Aorta (tissue), 5 donors: ENCODE measurements at regions of chrX and their contacts with region 1.

Region 1: GRCh38 chrX:17632942-17633341 is 104.4 kb upstream of the SCML1 start:
- DNase-seq: no peak
- ATAC-seq: no peak
- H3K4me3 ChIP-seq: no peak overlapping the region
- H3K27ac ChIP-seq: peak overlapping the region; percentile 75 to 84
- H3K4me1 ChIP-seq: peaks cover 0 to 2% of the 10 kb centered on the region in 2 donors
- H3K27me3 ChIP-seq: no peaks in the 10 kb centered on the region

Region 2: GRCh38 chrX:17021851-17022604 is 610.9 kb before region 1 on chrX:
- intact Hi-C with region 1: no loop called
- DNase-seq: no peak
- ATAC-seq: no peak
- H3K4me3 ChIP-seq: no peak overlapping the region
- H3K27ac ChIP-seq: no peak overlapping the region
- H3K4me1 ChIP-seq: peaks cover 0 to 4% of the 10 kb centered on the region in 2 donors
- H3K27me3 ChIP-seq: no peaks in the 10 kb centered on the region

Region 3: DNA sequence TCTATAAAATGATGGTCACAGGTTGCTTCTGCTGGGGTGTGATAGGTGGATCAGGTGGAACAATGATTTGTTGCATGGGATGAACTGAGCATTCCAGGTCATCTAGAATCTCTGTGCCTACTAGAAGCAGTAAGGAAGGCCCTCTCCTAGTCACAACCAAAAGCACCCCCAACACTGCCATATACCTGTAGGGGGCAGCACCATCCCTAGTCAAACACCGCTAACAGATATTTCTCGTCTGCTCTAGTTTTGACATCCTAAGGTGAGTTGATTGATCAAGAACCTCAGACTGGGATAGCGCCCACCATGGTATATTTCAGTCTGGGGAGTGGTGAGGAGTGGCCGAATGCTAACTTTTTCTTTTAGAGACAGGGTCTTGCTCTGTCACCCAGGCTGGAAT is 97.7 kb before region 1 on chrX:
- intact Hi-C with region 1: no loop called
- DNase-seq: no peak
- ATAC-seq: no peak
- H3K4me3 ChIP-seq: no peak overlapping the region
- H3K27ac ChIP-seq: no peak overlapping the region
- H3K4me1 ChIP-seq: no peaks in the 10 kb centered on the region
- H3K27me3 ChIP-seq: no peaks in the 10 kb centered on the region

Region 4: DNA sequence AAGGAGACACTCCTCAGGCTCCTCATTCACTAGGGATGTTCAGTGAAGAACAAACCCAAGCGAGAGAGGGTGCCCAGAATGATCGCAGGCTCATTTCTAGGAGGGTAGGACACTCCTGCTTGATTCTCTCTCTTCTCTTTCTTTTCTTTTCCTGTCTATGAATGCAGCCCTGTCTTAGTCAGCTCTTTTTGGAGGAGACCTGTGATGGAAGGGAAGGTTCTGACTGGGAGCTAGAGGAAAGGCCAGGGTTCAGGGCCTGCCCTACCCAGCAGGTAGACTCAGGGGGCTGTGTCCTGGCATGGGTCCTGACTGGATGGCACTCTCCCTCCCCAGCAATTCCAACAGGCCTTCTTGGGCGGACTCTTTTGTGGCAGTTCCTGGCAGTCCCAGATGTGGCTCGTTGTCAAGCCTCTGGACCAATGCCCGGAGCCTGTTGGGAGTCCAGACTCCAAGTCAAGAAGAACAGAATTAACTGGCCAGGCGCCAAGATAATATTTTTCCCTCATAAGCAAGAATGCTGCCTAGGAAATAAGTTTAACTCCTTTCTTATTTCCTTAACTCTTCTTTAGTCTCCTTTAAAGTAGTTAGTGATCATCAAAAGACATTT is 35.0 kb before region 1 on chrX:
- intact Hi-C with region 1: loop called in 1 of 2 experiments (anchors 5 kb)
- DNase-seq: peak; percentile 91
- ATAC-seq: peak; percentile 61
- H3K4me3 ChIP-seq: no peak overlapping the region
- H3K27ac ChIP-seq: peak overlapping the region in 1 of 2 donors; percentile 92
- H3K4me1 ChIP-seq: peaks cover 4 to 7% of the 10 kb centered on the region in 2 donors
- H3K27me3 ChIP-seq: no peaks in the 10 kb centered on the region